ENCODE measurements at regions of chr3 and their contacts with region 1.

Region 1: DNA sequence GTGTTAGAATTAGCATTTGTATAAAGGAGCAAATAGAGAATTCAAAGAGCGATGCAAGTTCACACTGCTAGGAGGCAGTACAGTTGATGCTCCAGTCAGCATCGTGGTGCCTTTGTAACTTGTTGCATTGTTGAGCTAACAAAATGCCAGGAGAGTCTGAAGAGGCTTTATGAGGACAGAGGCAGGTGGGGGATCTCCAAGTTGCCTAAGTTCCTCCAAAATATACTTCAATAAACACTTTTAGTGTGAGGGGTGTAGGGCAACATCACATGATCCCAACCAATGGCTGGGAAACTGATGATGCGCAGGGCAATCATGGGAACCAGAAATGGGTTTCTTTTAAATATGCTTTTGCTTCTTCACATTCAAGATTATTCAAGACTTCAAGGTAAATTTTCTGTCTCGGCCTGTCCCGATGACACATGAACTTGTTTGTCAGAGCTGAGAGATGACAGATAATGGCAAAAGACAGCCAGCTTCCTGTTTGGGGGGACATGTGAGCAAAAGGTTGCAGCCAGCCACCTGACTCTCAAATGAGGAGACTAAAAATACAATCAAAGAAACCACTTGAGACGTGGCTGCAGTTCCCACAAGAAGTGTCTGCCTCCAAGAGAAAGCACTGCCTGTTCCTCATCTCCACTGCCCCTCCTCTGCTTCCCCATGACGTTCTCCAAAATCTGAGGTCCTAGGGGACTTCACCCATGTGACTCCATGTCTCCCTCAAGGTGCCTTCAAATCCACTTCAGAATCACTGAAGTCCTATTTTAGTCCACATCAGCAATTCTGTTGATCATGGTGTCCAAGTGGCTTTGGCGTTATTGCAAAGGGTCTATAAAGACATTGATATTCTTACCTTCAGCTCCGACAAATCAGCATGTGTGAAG is 39.3 kb downstream of the KLHL6 start:
- DNase-seq: peak; percentile 88
- H3K4me3 Mint-ChIP-seq: peak overlapping the region; percentile 39
- H3K27ac Mint-ChIP-seq: peak overlapping the region; percentile 90
- H3K4me1 Mint-ChIP-seq: peaks cover 67% of the 10 kb centered on the region
- H3K27me3 Mint-ChIP-seq: no peaks in the 10 kb centered on the region

Region 2: GRCh38 chr3:183527428-183528379 is 11.5 kb after region 1 on chr3:
- intact Hi-C with region 1: loop called (anchors 1 kb)
- DNase-seq: peak; percentile 79
- H3K4me3 Mint-ChIP-seq: peak overlapping the region; percentile 73
- H3K27ac Mint-ChIP-seq: peak overlapping the region; percentile 79
- H3K4me1 Mint-ChIP-seq: peaks cover 47% of the 10 kb centered on the region
- H3K27me3 Mint-ChIP-seq: no peaks in the 10 kb centered on the region

Region 3: GRCh38 chr3:183540501-183541234 is 24.5 kb after region 1 on chr3:
- intact Hi-C with region 1: loop called (anchors 2 kb)
- DNase-seq: no peak
- H3K4me3 Mint-ChIP-seq: peak overlapping the region; percentile 25
- H3K27ac Mint-ChIP-seq: peak overlapping the region; percentile 56
- H3K4me1 Mint-ChIP-seq: peaks cover 73% of the 10 kb centered on the region
- H3K27me3 Mint-ChIP-seq: no peaks in the 10 kb centered on the region

Region 4: DNA sequence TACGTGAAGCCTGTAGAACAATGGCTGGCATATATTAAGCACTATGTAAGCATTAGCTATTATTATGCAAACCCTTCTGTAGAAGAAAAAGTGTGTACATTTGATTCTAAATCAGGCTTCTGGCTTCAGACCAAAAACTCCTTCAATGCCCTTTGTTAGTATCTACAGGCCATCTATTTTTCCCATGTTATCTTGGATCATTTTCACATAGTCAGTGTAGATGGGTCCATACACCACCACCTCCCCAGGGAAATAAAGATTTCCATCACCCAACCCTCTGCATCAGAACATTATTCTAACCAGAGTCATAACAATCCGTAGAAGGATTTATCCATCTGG is 47.3 kb after region 1 on chr3:
- intact Hi-C with region 1: no loop called
- DNase-seq: no peak
- H3K4me3 Mint-ChIP-seq: no peak overlapping the region
- H3K27ac Mint-ChIP-seq: no peak overlapping the region
- H3K4me1 Mint-ChIP-seq: peaks cover 11% of the 10 kb centered on the region
- H3K27me3 Mint-ChIP-seq: no peaks in the 10 kb centered on the region

Measured in activated CD4-positive, alpha-beta T cell treated with anti-CD3 and anti-CD28 coated beads, Interleukin-2, amount 10 ng/mL, durations not matched to agents 24 days and 14 days (primary cell).